Activated naive CD4-positive, alpha-beta T cell treated with anti-CD3 and anti-CD28 coated beads for 36 hours (primary cell): ENCODE measurements at regions of chr2 and their contacts with region 1.

Region 1: DNA sequence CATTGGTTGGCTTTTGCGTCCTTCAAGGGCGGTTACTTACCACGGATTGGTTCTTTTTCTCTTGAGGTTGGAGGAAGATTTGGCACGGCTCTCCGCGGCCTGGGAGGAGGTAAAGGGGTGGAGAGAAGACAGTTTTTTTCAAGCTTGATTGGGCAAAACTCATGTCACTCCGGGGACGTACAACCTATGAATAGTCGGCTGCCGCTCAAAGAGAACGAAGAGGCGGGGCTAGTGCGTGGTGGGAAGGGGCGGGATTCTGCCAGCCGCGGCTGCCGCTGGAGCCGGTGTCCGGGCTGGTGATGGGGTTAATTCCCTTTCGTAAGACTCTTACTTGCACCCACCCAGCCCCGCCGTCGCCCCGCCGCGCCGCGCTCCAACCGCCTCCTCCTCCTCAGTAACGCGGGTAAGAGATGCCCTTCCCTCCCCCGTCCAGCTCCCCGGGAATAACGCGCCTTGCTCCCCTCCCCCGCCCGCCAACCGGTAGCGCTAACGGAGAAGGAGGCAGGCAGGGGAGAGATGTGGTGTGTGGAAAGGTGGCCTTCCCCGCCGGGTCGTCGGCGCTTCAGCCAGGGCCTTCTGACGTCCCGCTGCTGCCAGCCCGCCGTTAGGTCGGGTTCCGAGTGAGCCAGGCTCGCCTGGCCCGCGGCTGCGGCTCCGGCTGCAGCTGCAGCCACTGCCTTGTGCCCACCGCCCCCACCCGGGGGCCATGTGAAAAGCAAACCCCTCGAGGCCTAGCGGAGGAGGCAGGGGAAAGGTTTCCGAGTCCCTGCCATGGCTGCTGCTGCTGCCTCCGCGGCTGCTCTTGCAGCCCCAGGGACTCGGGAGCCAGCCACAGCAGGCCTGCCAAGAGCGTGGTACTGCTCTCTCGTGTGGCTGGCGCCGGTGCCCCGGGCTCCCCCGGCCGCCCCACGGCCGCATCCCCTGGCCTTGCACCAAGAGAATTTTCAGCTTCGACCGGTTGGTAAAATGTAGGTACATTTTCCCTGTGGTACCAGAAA is at the start of gene R3HDM1:
- DNase-seq: peak; percentile 98
- H3K4me3 Mint-ChIP-seq: no peak within 1 kb of the TSS
- H3K27ac Mint-ChIP-seq: peak within 1 kb of the TSS; percentile 39
- H3K4me1 Mint-ChIP-seq: peaks cover 39% of the 10 kb centered on the region
- H3K27me3 Mint-ChIP-seq: no peaks in the 10 kb centered on the region
- total RNA-seq, gene R3HDM1: 61.9 to 73.1 TPM

Region 2: GRCh38 chr2:134918526-134919340 is 612.8 kb before region 1 on chr2 and contains the start of gene CCNT2:
- CTCF ChIA-PET with region 1: no interaction called
- intact Hi-C with region 1: loop called (anchors 1 kb)
- DNase-seq: peak; percentile 99
- H3K4me3 Mint-ChIP-seq: peak within 1 kb of the TSS; percentile 95
- H3K27ac Mint-ChIP-seq: peak within 1 kb of the TSS; percentile 98
- H3K4me1 Mint-ChIP-seq: peaks cover 24% of the 10 kb centered on the region
- H3K27me3 Mint-ChIP-seq: no peaks in the 10 kb centered on the region
- total RNA-seq, gene CCNT2: 31.9 to 33.2 TPM

Region 3: GRCh38 chr2:135473567-135473966 is 58.0 kb before region 1 on chr2:
- CTCF ChIA-PET with region 1: no interaction called
- intact Hi-C with region 1: loop called (anchors 2 kb)
- DNase-seq: peak; percentile 40
- H3K4me3 Mint-ChIP-seq: no peak overlapping the region
- H3K27ac Mint-ChIP-seq: no peak overlapping the region
- H3K4me1 Mint-ChIP-seq: peaks cover 2% of the 10 kb centered on the region
- H3K27me3 Mint-ChIP-seq: no peaks in the 10 kb centered on the region

Region 4: DNA sequence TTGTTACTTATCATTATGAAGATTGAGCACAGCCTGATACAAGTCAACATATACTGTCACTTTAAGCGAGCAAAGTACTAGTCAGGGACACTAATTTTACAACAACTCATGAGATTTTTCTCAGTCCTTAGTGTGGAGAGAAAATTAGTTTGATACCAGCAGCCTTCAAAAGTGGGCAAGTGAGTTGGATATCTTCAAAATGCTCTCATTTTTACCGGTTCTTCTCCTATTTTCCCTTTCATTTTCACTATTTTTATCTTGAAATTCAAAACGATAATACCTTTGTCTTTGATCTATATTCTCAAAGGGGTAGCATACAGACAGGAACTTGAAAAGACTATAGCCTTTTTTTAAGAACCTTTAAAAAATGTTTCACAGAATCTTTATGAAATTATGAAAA is 158.1 kb after region 1 on chr2:
- CTCF ChIA-PET with region 1: no interaction called
- intact Hi-C with region 1: loop called (anchors 1 kb)
- DNase-seq: no peak
- H3K4me3 Mint-ChIP-seq: peak overlapping the region; percentile 45
- H3K27ac Mint-ChIP-seq: peak overlapping the region; percentile 76
- H3K4me1 Mint-ChIP-seq: peaks cover 28% of the 10 kb centered on the region
- H3K27me3 Mint-ChIP-seq: no peaks in the 10 kb centered on the region

Region 5: GRCh38 chr2:135762022-135762421 is 230.5 kb after region 1 on chr2:
- CTCF ChIA-PET with region 1: no interaction called
- intact Hi-C with region 1: no loop called
- DNase-seq: no peak
- H3K4me3 Mint-ChIP-seq: no peak overlapping the region
- H3K27ac Mint-ChIP-seq: no peak overlapping the region
- H3K4me1 Mint-ChIP-seq: peaks cover 14% of the 10 kb centered on the region
- H3K27me3 Mint-ChIP-seq: no peaks in the 10 kb centered on the region

Region 6: DNA sequence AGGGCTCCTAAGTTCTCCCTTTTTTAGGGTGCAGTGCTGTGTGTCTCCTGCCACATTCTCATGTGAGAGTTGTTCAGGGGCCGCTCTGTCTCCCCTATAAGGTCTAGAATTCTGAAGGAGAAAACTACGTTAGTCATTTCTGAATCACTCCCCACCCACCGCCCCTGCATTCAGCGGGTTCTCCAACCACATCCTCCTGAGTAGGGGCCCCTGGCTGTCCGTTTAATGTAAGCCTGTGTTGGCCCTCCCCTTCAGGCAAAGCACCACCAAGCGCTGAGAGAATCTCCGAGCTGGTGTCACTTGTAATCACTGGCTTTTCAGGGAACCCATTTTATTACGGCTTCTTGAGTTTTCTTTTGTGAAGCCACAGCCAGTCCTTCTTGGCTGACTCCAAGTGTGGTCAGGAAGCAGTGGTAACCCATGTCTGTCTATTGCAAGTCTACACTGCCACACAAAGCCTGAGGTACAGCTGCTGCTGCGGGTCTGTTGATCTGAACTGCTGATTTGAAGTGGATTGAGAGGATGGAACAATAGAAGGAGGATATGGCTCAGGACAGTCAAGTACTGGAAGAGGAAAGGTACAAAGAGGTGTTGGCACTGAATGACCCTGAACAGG is 288.6 kb after region 1 on chr2:
- CTCF ChIA-PET with region 1: no interaction called
- intact Hi-C with region 1: loop called (anchors 2 kb)
- DNase-seq: peak; percentile 94
- H3K4me3 Mint-ChIP-seq: peak overlapping the region; percentile 64
- H3K27ac Mint-ChIP-seq: peak overlapping the region; percentile 79
- H3K4me1 Mint-ChIP-seq: peaks cover 48% of the 10 kb centered on the region
- H3K27me3 Mint-ChIP-seq: no peaks in the 10 kb centered on the region

Region 7: DNA sequence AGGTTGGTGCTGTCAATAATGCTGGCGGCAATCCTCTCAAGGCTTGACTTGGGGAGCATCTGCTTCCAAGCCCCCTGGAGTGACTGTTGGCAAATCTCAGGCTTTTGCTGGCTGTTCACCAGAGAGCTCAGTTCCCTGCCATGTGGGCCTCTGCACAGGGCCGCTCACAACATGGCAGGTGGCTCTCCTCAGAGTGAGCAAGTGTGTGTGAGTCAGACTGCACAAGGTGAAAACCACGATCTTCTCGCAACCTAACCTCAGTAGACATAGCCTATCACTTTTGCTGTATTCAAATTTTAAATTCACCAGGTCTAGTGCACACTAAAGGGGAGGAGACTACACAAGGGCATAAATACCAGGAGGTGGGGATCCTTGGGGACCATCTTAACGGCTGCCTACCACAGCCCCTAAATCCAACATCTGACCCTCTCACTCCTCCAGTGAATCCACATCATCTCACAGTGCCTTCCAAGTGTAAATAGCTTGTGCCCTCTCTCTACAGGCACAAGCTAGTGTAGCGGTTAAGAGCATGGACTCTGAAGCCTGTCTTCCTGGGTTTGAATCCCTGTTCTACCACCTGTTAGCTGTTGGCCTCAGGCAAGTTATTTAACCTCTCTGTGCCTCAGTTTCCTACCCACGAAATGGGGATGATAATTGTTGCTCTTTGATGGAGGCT is 774.1 kb after region 1 on chr2:
- CTCF ChIA-PET with region 1: no interaction called
- intact Hi-C with region 1: loop called (anchors 5 kb)
- DNase-seq: peak; percentile 85
- H3K4me3 Mint-ChIP-seq: no peak overlapping the region
- H3K27ac Mint-ChIP-seq: peak overlapping the region; percentile 81
- H3K4me1 Mint-ChIP-seq: peaks cover 21% of the 10 kb centered on the region
- H3K27me3 Mint-ChIP-seq: no peaks in the 10 kb centered on the region